Activated B cell treated with CpG ODN at 0.5 μM for 24 hours (primary cell): ENCODE measurements at regions of chr20 and their contacts with region 1.

Region 1: GRCh38 chr20:46117704-46118467 is at the start of gene CD40:
- DNase-seq: peak; percentile 91
- ATAC-seq: peak; percentile 76
- H3K4me3 Mint-ChIP-seq: peak within 1 kb of the TSS; percentile 100
- H3K27ac Mint-ChIP-seq: peak within 1 kb of the TSS; percentile 100
- H3K4me1 Mint-ChIP-seq: peaks cover 60% of the 10 kb centered on the region
- H3K27me3 Mint-ChIP-seq: no peaks in the 10 kb centered on the region
- CTCF ChIP-seq: no peak
- total RNA-seq, gene CD40: 410 and 464 TPM in 2 replicates

Region 2: DNA sequence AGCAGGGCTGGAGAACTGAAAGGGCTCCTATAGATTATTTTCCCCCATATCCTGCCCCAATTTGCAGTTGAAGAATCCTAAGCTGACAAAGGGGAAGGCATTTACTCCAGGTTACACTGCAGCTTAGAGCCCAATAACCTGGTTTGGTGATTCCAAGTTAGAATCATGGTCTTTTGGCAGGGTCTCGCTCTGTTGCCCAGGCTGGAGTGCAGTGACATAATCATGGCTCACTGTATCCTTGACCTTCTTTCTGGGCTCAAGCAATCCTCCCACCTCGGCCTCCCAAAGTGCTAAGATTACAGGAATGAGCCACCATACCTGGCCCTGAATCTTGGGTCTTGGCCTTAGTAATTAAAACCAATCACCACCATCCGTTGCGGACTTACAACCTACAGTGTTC is 110.2 kb before region 1 on chr20:
- CTCF ChIA-PET with region 1: no interaction called
- POLR2A ChIA-PET with region 1: interaction called, 14 read pairs
- intact Hi-C with region 1: no loop called
- DNase-seq: no peak
- ATAC-seq: no peak
- H3K4me3 Mint-ChIP-seq: no peak overlapping the region
- H3K27ac Mint-ChIP-seq: peak overlapping the region; percentile 8
- H3K4me1 Mint-ChIP-seq: peaks cover 85% of the 10 kb centered on the region
- H3K27me3 Mint-ChIP-seq: peaks cover 36% of the 10 kb centered on the region
- CTCF ChIP-seq: no peak

Region 3: DNA sequence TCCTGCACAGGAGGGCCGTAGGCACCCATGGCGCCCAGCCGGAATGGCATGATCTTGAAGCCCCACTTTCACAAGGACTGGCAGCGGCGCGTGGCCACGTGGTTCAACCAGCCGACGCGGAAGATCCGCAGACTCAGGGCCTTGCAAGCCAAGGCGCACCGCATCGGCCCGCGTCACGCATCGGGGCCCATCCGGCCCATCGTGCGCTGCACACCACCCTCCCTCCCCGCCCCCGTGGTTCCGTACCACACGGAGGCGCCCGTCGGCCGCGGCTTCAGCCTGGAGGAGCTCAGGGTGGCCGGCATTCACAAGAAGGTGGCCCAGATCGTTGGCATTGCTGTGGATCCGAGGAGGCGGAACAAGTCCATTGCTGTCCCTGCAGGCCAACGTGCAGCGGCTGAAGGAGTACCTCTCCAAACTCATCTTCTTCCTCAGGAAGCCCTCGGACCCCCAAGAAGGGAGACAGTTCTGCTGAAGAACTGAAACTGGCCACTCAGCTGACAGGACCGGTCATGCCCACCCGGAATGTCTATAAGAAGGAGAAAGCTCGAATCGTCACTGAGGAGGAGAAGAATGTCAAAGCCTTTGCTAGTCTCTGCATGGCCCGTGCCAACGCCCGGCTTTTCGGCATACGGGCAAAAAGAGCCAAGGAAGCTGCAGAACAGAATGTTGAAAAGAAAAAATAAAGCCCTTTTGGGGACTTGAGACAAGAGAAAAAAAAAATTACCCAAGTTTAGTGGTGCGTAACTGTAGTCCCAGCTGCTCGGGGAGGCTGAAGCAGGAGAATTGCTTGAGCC is 18.2 kb before region 1 on chr20:
- CTCF ChIA-PET with region 1: interaction called, 13 read pairs
- POLR2A ChIA-PET with region 1: interaction called, 50 read pairs
- intact Hi-C with region 1: loop called (anchors 1 kb)
- DNase-seq: peak; percentile 62
- ATAC-seq: peak; percentile 100
- H3K4me3 Mint-ChIP-seq: peak overlapping the region; percentile 74
- H3K27ac Mint-ChIP-seq: peak overlapping the region; percentile 50
- H3K4me1 Mint-ChIP-seq: peaks cover 16% of the 10 kb centered on the region
- H3K27me3 Mint-ChIP-seq: peaks cover 1% of the 10 kb centered on the region
- CTCF ChIP-seq: no peak

Region 4: DNA sequence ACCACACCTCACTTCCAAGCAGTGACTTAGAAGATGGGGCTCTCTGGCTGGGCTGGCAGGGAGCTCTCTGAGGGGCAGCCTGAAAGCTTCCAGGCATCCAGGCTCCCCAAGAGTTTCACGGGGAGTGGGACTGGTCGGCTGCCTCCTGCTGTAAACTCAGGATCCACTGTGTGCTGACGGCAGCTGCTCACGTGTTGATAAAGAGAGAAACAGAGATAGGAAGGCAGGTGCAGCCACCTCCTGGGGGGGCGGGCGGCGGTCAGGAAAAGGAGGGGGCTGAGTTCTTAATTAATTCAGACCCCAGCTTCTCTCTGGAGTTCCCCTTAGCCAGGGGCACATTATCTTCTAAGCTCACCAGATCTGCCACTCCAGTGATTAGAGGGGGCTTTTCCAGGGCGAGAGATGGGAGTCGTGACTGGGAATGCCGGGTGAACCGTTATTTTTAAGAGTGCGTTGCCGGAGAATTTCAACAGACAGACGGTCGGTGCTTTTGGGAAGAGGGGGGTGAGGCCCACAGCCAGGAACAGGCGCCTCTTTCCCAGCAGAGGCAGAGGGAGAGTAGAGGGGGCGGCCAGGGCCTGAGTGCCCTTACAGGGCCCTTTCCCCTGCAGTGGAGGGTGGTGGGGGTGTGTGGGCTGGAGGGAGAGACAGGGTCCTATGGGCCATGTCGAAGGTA is 71.1 kb after region 1 on chr20:
- CTCF ChIA-PET with region 1: no interaction called
- POLR2A ChIA-PET with region 1: no interaction called
- intact Hi-C with region 1: no loop called
- DNase-seq: no peak
- ATAC-seq: no peak
- H3K4me3 Mint-ChIP-seq: no peak overlapping the region
- H3K27ac Mint-ChIP-seq: no peak overlapping the region
- H3K4me1 Mint-ChIP-seq: no peaks in the 10 kb centered on the region
- H3K27me3 Mint-ChIP-seq: peaks cover 21% of the 10 kb centered on the region
- CTCF ChIP-seq: no peak

Region 5: GRCh38 chr20:46349035-46349741 is 231.3 kb after region 1 on chr20:
- CTCF ChIA-PET with region 1: no interaction called
- POLR2A ChIA-PET with region 1: interaction called, 10 read pairs
- intact Hi-C with region 1: no loop called
- DNase-seq: peak; percentile 40
- ATAC-seq: no peak
- H3K4me3 Mint-ChIP-seq: no peak overlapping the region
- H3K27ac Mint-ChIP-seq: no peak overlapping the region
- H3K4me1 Mint-ChIP-seq: peaks cover 28% of the 10 kb centered on the region
- H3K27me3 Mint-ChIP-seq: no peaks in the 10 kb centered on the region
- CTCF ChIP-seq: no peak

Region 6: DNA sequence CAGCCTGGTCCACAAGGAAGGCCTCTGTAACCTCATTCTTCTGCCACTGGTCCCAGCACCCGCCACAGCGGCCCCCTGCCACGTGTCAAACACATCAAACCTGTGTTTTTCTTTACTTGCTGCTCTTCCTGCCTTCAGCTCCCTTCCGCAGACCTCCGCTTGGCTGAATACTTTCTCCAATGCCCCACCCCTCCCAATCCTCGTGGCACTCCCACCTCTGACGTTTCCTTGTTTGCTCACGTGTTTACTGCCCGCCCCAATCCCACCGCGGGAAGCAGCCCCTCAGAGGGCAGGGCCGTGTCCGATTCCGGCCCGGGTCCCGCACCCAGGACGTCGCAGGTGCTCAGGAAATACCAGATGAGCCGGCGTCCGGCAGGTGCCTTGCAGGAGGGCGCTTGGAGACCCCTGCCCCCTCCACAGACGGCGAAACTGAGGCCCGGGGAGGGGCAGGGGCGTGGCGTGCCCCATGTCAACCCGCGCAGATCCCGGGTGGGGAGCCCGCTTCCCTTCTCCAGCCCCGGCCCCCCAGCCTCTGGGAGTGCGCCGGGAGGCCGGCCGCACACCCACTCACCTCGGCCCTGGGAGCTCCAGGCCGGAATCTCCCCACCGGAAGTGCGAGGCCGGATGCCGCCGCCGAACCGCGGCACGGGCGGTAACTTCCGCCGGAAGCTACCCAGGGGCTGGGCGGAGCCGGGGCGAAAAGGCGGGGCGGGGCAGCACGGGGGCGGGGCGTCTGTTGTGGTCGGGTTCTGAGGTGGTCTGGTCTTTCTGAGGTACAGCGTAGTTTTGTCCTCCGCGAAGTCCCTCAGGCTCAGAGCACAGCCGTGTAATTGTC is 246.1 kb after region 1 on chr20:
- CTCF ChIA-PET with region 1: interaction called, 3 read pairs
- POLR2A ChIA-PET with region 1: interaction called, 4 read pairs
- intact Hi-C with region 1: loop called (anchors 2 kb)
- DNase-seq: peak; percentile 84
- ATAC-seq: peak; percentile 79
- H3K4me3 Mint-ChIP-seq: peak overlapping the region; percentile 93
- H3K27ac Mint-ChIP-seq: peak overlapping the region; percentile 90
- H3K4me1 Mint-ChIP-seq: peaks cover 54% of the 10 kb centered on the region
- H3K27me3 Mint-ChIP-seq: no peaks in the 10 kb centered on the region
- CTCF ChIP-seq: no peak